Heart right ventricle (tissue), 16 donors: ENCODE measurements at regions of chr2 and their contacts with region 1.

Region 1: DNA sequence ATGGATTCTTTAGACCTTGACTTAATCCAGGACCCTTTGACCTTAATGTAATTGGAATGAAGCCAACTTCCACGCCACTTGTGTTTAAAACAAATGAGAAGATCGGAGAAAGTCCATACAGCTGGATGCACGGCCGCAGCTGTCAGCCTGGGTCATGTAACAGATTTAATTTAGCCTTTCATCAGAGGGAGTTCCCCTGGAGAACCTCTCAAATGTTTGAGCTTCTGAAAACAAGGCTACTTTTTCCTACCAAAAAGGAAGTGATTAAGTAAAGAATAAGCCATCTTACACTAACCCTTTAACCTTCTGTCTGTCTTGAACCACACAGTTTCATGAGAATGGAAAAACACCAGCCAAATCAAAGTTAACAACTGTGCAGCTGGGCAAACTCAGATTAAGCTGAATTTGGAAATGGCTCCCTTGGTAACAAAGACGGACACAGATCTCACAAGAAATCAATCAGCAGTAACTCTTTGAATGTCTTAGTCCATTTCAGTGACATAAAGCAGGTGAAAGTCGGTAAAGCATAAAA is 103.6 kb downstream of the DOCK10 start:
- DNase-seq: no peak
- ATAC-seq: peak in 5 of 8 donors; percentile 44 to 52 (median 50)
- H3K4me3 ChIP-seq: no peak overlapping the region
- H3K27ac ChIP-seq: peak overlapping the region in 1 of 10 donors; percentile 42
- H3K4me1 ChIP-seq: peaks cover 0 to 62% (median 4%) of the 10 kb centered on the region in 9 donors
- H3K27me3 ChIP-seq: no peaks in the 10 kb centered on the region
- CTCF ChIP-seq: no peak

Region 2: DNA sequence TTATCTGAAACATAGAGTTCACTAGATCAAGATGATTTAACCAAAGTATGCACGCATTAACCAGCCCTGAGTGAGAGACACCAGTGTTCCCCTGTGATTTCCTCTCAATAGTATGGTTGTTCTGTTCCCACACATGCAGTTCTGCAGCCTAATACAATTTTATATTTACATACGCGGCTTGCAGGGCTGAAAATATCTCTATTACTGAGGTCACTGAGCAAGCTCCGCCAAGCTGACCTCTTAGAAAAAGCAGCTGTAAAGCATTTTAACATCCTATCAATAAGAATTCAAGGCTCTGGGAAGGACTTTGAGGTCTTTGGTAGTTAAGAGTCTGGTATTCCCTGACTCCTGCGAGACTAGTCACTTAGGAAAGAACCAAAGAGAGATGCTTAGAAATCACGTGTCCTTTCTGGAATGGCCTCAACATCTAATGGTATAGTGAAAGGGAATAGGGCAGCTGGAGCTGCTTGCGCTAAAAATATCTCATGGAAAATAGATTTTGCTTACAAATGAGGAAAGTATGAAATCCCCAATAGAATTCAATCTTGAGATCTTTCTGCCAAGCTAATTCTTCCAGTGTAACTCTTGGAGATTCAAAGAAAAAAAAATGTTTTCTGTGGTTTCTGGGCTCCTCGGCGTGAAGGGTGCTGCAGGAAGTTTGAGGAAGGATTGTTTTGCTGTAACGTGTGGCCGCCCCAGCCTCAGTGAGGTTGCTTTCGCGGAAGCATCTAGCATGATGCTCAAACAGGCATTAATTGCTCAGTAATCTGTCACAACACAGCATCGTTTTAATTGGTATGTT is 44.4 kb after region 1 on chr2:
- intact Hi-C with region 1: loop called in 1 of 10 experiments (anchors 5 kb)
- DNase-seq: no peak
- ATAC-seq: peak; percentile 30 to 70 (median 61)
- H3K4me3 ChIP-seq: peak overlapping the region in 9 of 10 donors; percentile 7 to 46 (median 34)
- H3K27ac ChIP-seq: peak overlapping the region; percentile 23 to 72 (median 50)
- H3K4me1 ChIP-seq: peaks cover 0 to 30% (median 0%) of the 10 kb centered on the region in 9 donors
- H3K27me3 ChIP-seq: peaks cover 0 to 2% (median 0%) of the 10 kb centered on the region in 7 donors
- CTCF ChIP-seq: no peak

Region 3: GRCh38 chr2:225223301-225223700 is 284.6 kb after region 1 on chr2:
- intact Hi-C with region 1: no loop called
- DNase-seq: no peak
- ATAC-seq: no peak
- H3K4me3 ChIP-seq: no peak overlapping the region
- H3K27ac ChIP-seq: no peak overlapping the region
- H3K4me1 ChIP-seq: no peaks in the 10 kb centered on the region
- H3K27me3 ChIP-seq: no peaks in the 10 kb centered on the region
- CTCF ChIP-seq: no peak